ENCODE measurements at regions of chr10 and their contacts with region 1.

Region 1: GRCh38 chr10:92591550-92592022 is 1.3 kb upstream of the KIF11 start:
- DNase-seq: peak; percentile 93
- H3K4me3 ChIP-seq: peak overlapping the region; percentile 93
- H3K27ac ChIP-seq: peak overlapping the region; percentile 95
- H3K4me1 ChIP-seq: peaks cover 25% of the 10 kb centered on the region
- H3K27me3 ChIP-seq: no peaks in the 10 kb centered on the region
- CTCF ChIP-seq: no peak

Region 2: GRCh38 chr10:92757066-92757710 is 165.6 kb after region 1 on chr10:
- intact Hi-C with region 1: loop called (anchors 2 kb)
- DNase-seq: peak; percentile 79
- H3K4me3 ChIP-seq: peak overlapping the region; percentile 32
- H3K27ac ChIP-seq: peak overlapping the region; percentile 81
- H3K4me1 ChIP-seq: peaks cover 27% of the 10 kb centered on the region
- H3K27me3 ChIP-seq: no peaks in the 10 kb centered on the region
- CTCF ChIP-seq: peak; percentile 36

Measured in left ventricle myocardium inferior (tissue), 1 donor.